Gastrocnemius medialis (tissue), 4 donors: ENCODE measurements at regions of chr2 and their contacts with region 1.

Region 1: GRCh38 chr2:178280244-178280852 is 86.0 kb downstream of the OSBPL6 start:
- DNase-seq: no peak
- ATAC-seq: peak in 1 of 2 donors; percentile 55
- H3K4me3 ChIP-seq: no peak overlapping the region
- H3K27ac ChIP-seq: peak overlapping the region in 2 of 4 donors; percentile 29 to 33
- H3K4me1 ChIP-seq: peaks cover 47 to 58% of the 10 kb centered on the region in 2 donors
- H3K27me3 ChIP-seq: no peaks in the 10 kb centered on the region
- CTCF ChIP-seq: peak; percentile 67 to 80 (median 72)
- POLR2A ChIP-seq: no peak

Region 2: GRCh38 chr2:178090483-178090882 is 189.9 kb before region 1 on chr2:
- in situ Hi-C with region 1: no loop called
- intact Hi-C with region 1: no loop called
- DNase-seq: no peak
- ATAC-seq: no peak
- H3K4me3 ChIP-seq: no peak overlapping the region
- H3K27ac ChIP-seq: no peak overlapping the region
- H3K4me1 ChIP-seq: peaks cover 0 to 3% of the 10 kb centered on the region in 2 donors
- H3K27me3 ChIP-seq: no peaks in the 10 kb centered on the region
- CTCF ChIP-seq: no peak
- POLR2A ChIP-seq: no peak

Region 3: GRCh38 chr2:178112202-178113152 is 167.9 kb before region 1 on chr2 and contains the start of gene RBM45:
- in situ Hi-C with region 1: no loop called
- intact Hi-C with region 1: loop called (anchors 5 kb)
- DNase-seq: peak; percentile 83 to 94
- ATAC-seq: peak; percentile 96 to 97
- H3K4me3 ChIP-seq: peak within 1 kb of the TSS; percentile 88 to 94 (median 91)
- H3K27ac ChIP-seq: peak within 1 kb of the TSS; percentile 78 to 89 (median 84)
- H3K4me1 ChIP-seq: peaks cover 13 to 18% of the 10 kb centered on the region in 2 donors
- H3K27me3 ChIP-seq: no peaks in the 10 kb centered on the region
- CTCF ChIP-seq: peak; percentile 93 to 98 (median 98)
- POLR2A ChIP-seq: peak; percentile 26 to 61
- total RNA-seq, gene RBM45: 2.0 to 8.1 (median 5.5) TPM

Region 4: GRCh38 chr2:178128836-178129630 is 151.3 kb before region 1 on chr2:
- in situ Hi-C with region 1: loop called in 3 of 4 experiments (anchors 10 to 25 kb)
- intact Hi-C with region 1: loop called (anchors 1 kb)
- DNase-seq: no peak
- ATAC-seq: peak; percentile 64 to 81
- H3K4me3 ChIP-seq: no peak overlapping the region
- H3K27ac ChIP-seq: peak overlapping the region; percentile 25 to 55 (median 44)
- H3K4me1 ChIP-seq: peaks cover 9 to 18% of the 10 kb centered on the region in 2 donors
- H3K27me3 ChIP-seq: no peaks in the 10 kb centered on the region
- CTCF ChIP-seq: no peak
- POLR2A ChIP-seq: no peak

Region 5: DNA sequence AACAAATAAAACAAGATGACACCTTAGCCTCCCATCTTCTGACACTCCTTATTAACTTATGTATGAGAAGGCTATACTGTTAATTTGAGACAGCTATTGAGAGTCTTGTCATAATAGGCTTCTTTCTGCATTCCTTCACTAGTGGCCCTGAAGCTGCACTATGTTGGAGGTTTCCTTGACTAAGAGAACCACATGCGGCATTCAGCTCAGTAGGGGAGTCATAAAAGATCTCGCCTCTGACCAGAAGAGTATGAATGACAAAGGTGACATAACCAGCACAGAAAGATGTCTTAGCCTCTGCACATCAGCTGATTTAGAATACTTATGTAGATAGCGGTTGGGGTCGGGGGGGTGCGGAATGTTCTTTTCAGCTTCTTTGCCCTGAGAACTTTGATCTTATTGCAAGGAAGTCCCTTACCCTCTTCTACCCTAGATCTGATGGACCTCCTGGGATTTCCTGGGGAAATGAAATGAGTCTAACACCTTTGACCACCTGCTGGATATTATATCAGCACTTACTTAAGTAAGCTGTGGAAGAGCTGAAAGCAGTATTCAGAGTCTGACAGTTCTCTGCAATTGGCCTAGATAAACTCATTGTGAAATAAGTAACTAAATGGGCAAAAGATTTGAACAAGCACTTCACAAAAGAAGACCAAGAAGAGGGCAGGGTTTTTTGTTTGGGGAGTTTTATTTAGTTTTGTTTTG is 143.9 kb before region 1 on chr2:
- in situ Hi-C with region 1: loop called in 3 of 4 experiments (anchors 10 to 25 kb)
- intact Hi-C with region 1: loop called (anchors 1 kb)
- DNase-seq: no peak
- ATAC-seq: no peak
- H3K4me3 ChIP-seq: no peak overlapping the region
- H3K27ac ChIP-seq: no peak overlapping the region
- H3K4me1 ChIP-seq: peaks cover 4% of the 10 kb centered on the region in 2 donors
- H3K27me3 ChIP-seq: no peaks in the 10 kb centered on the region
- CTCF ChIP-seq: no peak
- POLR2A ChIP-seq: no peak

Region 6: GRCh38 chr2:178142274-178143065 is 137.9 kb before region 1 on chr2:
- in situ Hi-C with region 1: loop called in 3 of 4 experiments (anchors 10 to 25 kb)
- intact Hi-C with region 1: no loop called
- DNase-seq: peak in 1 of 2 donors; percentile 27
- ATAC-seq: peak; percentile 98 to 100
- H3K4me3 ChIP-seq: peak overlapping the region in 1 of 4 donors; percentile 9
- H3K27ac ChIP-seq: peak overlapping the region in 3 of 4 donors; percentile 42 to 69 (median 57)
- H3K4me1 ChIP-seq: peaks cover 6 to 12% of the 10 kb centered on the region in 2 donors
- H3K27me3 ChIP-seq: no peaks in the 10 kb centered on the region
- CTCF ChIP-seq: no peak
- POLR2A ChIP-seq: no peak